Dendritic cell treated with granulocyte-macrophage colony-stimulating factor and Interleukin-4, amounts not matched to agents 40 ng/mL and 50 ng/mL, for 4 days (primary cell): ENCODE measurements at regions of chr17 and their contacts with region 1.

Region 1: DNA sequence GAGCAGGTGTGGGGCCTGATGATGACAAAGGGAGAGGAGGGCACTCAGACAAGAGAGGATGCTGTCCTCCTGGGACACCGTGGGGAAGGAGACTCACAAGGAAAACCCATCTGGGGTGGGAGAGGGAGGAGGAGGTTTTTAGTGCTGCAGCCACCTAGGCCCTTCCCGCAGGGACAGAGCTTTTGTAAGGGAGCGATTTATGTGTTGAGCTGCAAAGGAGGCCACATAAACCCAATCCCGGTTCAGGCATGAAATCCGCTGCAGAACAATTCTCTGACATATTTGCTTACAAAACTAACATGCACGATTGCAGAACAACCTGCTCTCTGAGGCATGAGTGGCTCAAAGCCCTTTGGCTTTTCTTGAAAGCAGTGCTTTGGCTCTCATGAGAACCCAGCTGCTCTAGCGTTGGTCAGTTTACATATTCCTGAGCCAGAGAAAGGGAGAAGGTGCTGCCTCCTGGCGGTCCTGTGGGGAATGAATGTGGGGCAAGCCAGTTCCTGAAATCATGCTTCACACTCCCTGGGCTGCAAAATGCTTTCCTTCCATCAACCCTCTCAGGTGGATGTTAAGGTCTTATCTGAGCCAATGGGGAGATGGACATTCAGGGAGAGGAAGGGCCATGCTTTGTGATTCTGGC is 122.4 kb upstream of the NLRP1 start:
- H3K4me3 Mint-ChIP-seq: no peak overlapping the region
- H3K27ac Mint-ChIP-seq: no peak overlapping the region
- H3K4me1 Mint-ChIP-seq: no peaks in the 10 kb centered on the region
- H3K27me3 Mint-ChIP-seq: peaks cover 48% of the 10 kb centered on the region

Region 2: GRCh38 chr17:5592382-5592781 is 114.3 kb before region 1 on chr17:
- intact Hi-C with region 1: loop called (anchors 1 kb)
- H3K4me3 Mint-ChIP-seq: no peak overlapping the region
- H3K27ac Mint-ChIP-seq: no peak overlapping the region
- H3K4me1 Mint-ChIP-seq: peaks cover 2% of the 10 kb centered on the region
- H3K27me3 Mint-ChIP-seq: peaks cover 57% of the 10 kb centered on the region

Region 3: GRCh38 chr17:6421700-6422604 is 715.3 kb after region 1 on chr17:
- intact Hi-C with region 1: loop called (anchors 5 kb)
- H3K4me3 Mint-ChIP-seq: no peak overlapping the region
- H3K27ac Mint-ChIP-seq: no peak overlapping the region
- H3K4me1 Mint-ChIP-seq: peaks cover 11% of the 10 kb centered on the region
- H3K27me3 Mint-ChIP-seq: peaks cover 68% of the 10 kb centered on the region